ENCODE measurements at regions of chr4 and their contacts with region 1.

Region 1: DNA sequence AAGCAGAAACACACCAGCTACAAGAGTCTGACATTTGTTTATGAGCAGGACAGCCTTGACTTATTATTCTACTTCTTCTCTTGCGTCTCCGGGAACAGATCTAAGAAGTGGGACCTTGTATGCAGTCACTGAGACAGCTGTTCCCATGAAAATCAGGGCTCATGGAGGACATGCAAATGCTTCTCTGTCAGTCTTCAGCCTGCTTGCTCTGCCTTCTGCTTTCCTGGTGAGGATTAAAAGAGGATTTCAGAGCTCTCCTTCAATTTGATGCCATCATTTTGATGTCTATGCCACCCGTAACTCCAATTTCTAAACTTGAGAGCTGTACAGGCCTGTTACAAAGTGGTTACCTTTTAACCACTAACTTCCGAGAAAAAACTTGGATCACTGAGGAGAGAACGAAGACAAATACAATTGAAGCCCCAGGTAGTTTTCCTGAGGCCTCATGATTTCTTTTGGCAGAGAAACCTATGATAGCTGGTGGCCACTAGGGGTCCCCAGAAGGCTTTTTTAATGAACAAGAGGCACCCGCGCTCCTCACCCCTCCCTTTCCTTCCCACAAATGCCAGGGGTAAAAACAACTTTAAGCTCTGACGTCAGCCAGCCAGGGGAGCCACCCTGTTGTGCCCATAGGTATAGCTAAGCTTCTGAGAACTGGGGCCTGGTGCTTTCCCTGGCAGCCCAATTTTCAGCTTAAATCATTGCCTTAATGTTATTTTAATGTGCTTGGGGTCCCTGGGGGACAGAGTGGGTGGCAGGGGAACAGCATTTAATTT is 97.0 kb downstream of the DDIT4L start:
- DNase-seq: peak; percentile 43
- ATAC-seq: peak; percentile 95
- H3K4me3 ChIP-seq: no peak overlapping the region
- H3K27ac ChIP-seq: no peak overlapping the region
- H3K4me1 ChIP-seq: no peaks in the 10 kb centered on the region
- H3K27me3 ChIP-seq: no peaks in the 10 kb centered on the region
- CTCF ChIP-seq: peak; percentile 78 to 87 (median 81)
- EP300 ChIP-seq: peak in 1 of 2 experiments; percentile 20; a peak in 2 of 4 replicates
- POLR2A ChIP-seq: no peak
- RAD21 ChIP-seq: peak; percentile 78

Region 2: DNA sequence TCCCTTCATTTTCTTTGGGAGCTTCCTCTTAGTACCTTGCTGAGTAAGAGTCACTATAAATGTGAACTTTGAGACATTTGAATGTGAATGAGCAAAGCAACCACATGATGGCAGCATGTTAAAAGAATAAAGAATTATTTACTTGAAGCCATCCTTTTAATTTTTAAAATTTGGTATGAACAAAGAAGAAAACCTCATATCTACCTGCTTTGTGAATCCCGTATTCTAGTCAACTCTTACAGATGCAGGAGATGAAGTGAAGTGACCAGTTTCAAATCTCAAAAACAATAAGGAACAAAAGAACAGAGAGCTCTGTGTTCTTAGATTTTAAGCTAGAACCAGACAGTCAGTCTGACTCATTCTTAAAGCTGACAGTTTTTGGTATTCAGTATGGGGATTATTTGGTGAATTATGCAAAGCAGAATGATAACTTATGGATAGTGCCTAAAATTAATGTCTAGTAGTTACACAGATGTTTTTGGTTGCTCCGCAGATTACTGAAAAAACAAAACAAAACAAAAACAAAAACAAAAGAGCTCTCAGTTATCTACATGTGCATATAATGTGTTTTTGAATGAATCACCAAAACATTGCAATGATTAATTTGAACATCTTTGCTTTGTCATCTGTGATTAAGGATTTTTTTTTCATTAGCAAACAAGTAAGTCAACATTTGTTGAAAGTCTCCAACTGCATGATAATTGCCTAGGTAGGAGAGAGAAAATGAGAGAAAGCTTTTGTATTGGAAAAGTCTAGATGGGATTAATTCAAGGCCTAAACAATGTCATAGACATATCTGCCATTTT is 95.0 kb before region 1 on chr4:
- CTCF ChIA-PET with region 1: interaction called, 48 read pairs
- POLR2A ChIA-PET with region 1: no interaction called
- RAD21 ChIA-PET with region 1: interaction called, 28 read pairs
- SMC1A ChIA-PET with region 1: interaction called, 20 read pairs
- in situ Hi-C with region 1: no loop called
- intact Hi-C with region 1: loop called (anchors 5 kb)
- DNase-seq: peak; percentile 2
- ATAC-seq: peak; percentile 73
- H3K4me3 ChIP-seq: no peak overlapping the region
- H3K27ac ChIP-seq: no peak overlapping the region
- H3K4me1 ChIP-seq: no peaks in the 10 kb centered on the region
- H3K27me3 ChIP-seq: no peaks in the 10 kb centered on the region
- CTCF ChIP-seq: peak; percentile 19 to 45 (median 30); a peak in 3 of 6 replicates
- EP300 ChIP-seq: no peak
- POLR2A ChIP-seq: no peak
- RAD21 ChIP-seq: peak; percentile 52

Region 3: GRCh38 chr4:100106982-100107381 is 13.7 kb after region 1 on chr4:
- CTCF ChIA-PET with region 1: interaction called, 92 read pairs
- POLR2A ChIA-PET with region 1: interaction called, 4 read pairs
- RAD21 ChIA-PET with region 1: interaction called, 16 read pairs
- SMC1A ChIA-PET with region 1: interaction called, 16 read pairs
- in situ Hi-C with region 1: no loop called
- intact Hi-C with region 1: no loop called
- DNase-seq: peak; percentile 71
- ATAC-seq: peak; percentile 99
- H3K4me3 ChIP-seq: no peak overlapping the region
- H3K27ac ChIP-seq: no peak overlapping the region
- H3K4me1 ChIP-seq: peaks cover 2% of the 10 kb centered on the region; the same call in 1 of the 2 replicates
- H3K27me3 ChIP-seq: no peaks in the 10 kb centered on the region
- CTCF ChIP-seq: no peak
- EP300 ChIP-seq: 0 out of 4 replicates have a peak, but pooled peaks of 1 of the 2 experiments have one; percentile 20
- POLR2A ChIP-seq: no peak
- RAD21 ChIP-seq: no peak

Region 4: GRCh38 chr4:100372432-100372831 is 279.2 kb after region 1 on chr4:
- CTCF ChIA-PET with region 1: interaction called, 7 read pairs
- POLR2A ChIA-PET with region 1: no interaction called
- RAD21 ChIA-PET with region 1: interaction called, 4 read pairs
- SMC1A ChIA-PET with region 1: interaction called, 3 read pairs
- in situ Hi-C with region 1: no loop called
- intact Hi-C with region 1: loop called (anchors 5 kb)
- DNase-seq: no peak
- ATAC-seq: peak; percentile 64
- H3K4me3 ChIP-seq: no peak overlapping the region
- H3K27ac ChIP-seq: no peak overlapping the region
- H3K4me1 ChIP-seq: no peaks in the 10 kb centered on the region
- H3K27me3 ChIP-seq: no peaks in the 10 kb centered on the region
- CTCF ChIP-seq: peak; percentile 20 to 37 (median 30); a peak in 4 of 6 replicates
- EP300 ChIP-seq: no peak
- POLR2A ChIP-seq: no peak
- RAD21 ChIP-seq: peak; percentile 25; the same call in 1 of the 2 replicates

Region 5: GRCh38 chr4:101169044-101170014 is 1076.0 kb after region 1 on chr4:
- CTCF ChIA-PET with region 1: interaction called, 10 read pairs
- POLR2A ChIA-PET with region 1: no interaction called
- RAD21 ChIA-PET with region 1: interaction called, 4 read pairs
- SMC1A ChIA-PET with region 1: interaction called, 5 read pairs
- in situ Hi-C with region 1: no loop called
- intact Hi-C with region 1: no loop called
- DNase-seq: peak; percentile 47
- ATAC-seq: peak; percentile 100
- H3K4me3 ChIP-seq: no peak overlapping the region
- H3K27ac ChIP-seq: no peak overlapping the region
- H3K4me1 ChIP-seq: no peaks in the 10 kb centered on the region
- H3K27me3 ChIP-seq: no peaks in the 10 kb centered on the region
- CTCF ChIP-seq: peak; percentile 79 to 82 (median 81)
- EP300 ChIP-seq: no peak
- POLR2A ChIP-seq: no peak
- RAD21 ChIP-seq: peak; percentile 96